Prostate gland (tissue), 2 donors: ENCODE measurements at regions of chr1 and their contacts with region 1.

Region 1: DNA sequence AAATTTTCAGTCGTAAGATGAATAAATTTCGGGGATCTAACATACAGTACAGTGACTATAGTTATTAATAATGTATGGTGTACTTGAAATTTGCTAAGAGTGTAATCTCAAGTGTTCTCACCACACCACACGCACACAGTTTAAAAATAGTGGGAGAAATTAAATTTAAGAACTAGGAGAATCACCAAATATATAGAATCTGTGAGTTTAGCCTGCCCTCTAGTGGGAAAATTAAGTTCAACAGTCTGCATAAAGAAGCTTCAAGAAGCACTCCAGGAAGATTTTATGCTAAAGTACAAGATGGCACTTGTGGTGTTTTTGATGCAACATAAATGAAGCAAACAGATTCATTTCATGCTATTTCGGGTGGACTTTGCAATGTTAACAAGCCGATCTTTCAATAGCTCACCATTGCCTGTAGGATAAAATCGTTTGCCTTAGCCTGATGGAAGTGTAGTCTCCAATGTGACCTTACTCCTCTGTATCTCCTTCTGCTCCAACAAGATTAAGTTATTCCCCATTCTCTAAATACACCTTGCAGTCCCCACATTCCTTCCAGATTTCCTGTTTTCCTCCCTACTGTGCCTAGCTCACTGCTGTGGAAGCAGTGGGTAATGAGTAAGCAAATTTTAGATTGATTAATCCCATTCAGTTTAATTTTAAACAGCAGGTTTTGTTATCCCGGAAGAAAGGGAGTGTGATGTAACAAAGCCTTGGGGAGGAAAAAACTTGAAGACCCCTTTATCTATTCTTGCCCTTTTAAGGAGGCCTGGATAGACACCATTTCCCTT is 8.7 kb upstream of the PIK3C2B start:
- DNase-seq: peak; percentile 55
- H3K4me3 ChIP-seq: no peak overlapping the region
- H3K27ac ChIP-seq: peak overlapping the region in 1 of 2 donors; percentile 18
- H3K4me1 ChIP-seq: peaks cover 2% of the 10 kb centered on the region
- H3K27me3 ChIP-seq: no peaks in the 10 kb centered on the region
- CTCF ChIP-seq: peak; percentile 77 to 92 (median 85)
- POLR2A ChIP-seq: no peak

Region 2: DNA sequence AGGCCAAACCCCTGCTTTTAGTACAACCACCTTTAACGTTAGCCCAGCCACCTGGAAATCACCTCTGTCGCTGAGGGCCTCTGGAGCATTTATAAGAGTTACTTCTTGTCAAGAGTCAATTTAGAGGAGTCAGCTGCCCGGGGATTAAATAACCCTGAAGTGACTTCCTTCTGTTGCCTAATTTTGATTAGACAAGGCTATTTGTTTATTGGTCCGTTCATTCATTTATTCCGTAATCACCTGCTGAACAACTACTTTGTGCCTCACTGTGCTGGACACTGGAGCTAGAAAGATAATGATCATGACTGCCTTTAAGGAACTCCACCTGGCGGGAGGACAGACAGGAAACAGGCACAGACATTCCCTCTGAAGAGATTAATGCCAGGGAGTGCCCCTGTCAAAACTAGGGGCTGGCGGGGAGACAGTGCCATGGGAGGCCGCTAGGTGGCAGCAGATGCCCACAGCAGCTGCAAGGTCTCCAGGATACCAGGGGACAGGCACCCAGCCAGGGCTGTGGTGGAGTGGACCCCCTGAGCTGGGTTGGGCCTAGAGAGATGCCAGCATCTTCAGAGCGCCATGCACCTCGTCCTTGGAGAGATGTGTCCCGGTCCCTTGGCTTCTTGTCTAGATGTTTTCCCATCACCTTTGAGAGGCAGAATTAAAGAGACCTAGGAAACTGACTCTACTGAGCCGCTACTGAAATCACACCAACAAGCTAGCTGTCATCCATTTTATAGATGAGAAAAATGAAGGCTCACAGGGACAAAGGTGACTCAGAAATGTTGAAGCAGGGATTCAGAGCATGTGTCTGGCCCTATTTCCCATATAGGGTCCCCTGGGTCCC is 340.9 kb before region 1 on chr1:
- intact Hi-C with region 1: loop called (anchors 5 kb)
- DNase-seq: peak; percentile 90
- H3K4me3 ChIP-seq: no peak overlapping the region
- H3K27ac ChIP-seq: no peak overlapping the region
- H3K4me1 ChIP-seq: no peaks in the 10 kb centered on the region
- H3K27me3 ChIP-seq: no peaks in the 10 kb centered on the region
- CTCF ChIP-seq: peak; percentile 96 to 100 (median 99)
- POLR2A ChIP-seq: no peak

Region 3: DNA sequence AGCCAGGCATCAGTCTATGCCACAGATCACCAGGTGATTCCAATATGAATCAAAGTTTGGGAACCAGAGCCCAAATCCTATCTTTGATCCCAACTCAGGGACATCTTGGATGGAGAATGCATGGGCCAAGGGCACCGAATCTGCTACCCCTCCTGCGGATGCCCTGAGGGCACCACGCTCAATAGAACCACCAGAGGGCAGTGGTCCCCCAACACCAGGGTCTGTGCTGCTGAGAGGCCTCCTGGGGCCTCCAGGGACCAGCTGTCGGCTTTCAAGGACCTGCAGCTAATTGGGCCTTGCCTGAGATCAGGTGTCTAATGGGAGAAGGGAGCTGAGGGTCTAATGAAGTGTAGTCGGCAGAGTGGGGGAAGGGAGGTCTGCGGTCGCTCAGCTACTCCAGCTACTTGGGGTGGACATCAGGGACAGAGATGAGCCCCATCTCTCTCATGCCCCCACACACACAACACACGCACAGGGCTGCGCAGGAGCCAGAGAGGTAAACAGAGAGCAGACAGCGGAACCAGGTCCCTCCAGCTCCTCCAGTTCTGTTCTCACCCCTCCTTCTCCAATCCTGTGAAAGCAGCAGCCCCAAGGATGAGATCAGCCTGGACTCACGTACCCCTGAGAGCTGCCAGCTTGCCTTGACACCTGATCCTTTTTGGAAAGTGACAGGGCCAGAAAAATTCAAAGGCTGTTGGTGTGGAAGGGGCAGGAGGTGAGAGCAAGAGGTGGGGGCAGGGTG is 56.8 kb before region 1 on chr1:
- intact Hi-C with region 1: loop called (anchors 2 kb)
- DNase-seq: peak; percentile 61
- H3K4me3 ChIP-seq: no peak overlapping the region
- H3K27ac ChIP-seq: peak overlapping the region in 1 of 2 donors; percentile 42
- H3K4me1 ChIP-seq: peaks cover 13% of the 10 kb centered on the region
- H3K27me3 ChIP-seq: no peaks in the 10 kb centered on the region
- CTCF ChIP-seq: peak; percentile 42 to 82 (median 74)
- POLR2A ChIP-seq: no peak